ENCODE measurements at regions of chr12 and their contacts with region 1.

Region 1: GRCh38 chr12:46439793-46440511 is 67.4 kb upstream of the SLC38A2 start:
- DNase-seq: no peak
- ATAC-seq: no peak
- H3K4me3 ChIP-seq: no peak overlapping the region
- H3K27ac ChIP-seq: no peak overlapping the region
- H3K4me1 ChIP-seq: no peaks in the 10 kb centered on the region
- H3K27me3 ChIP-seq: no peaks in the 10 kb centered on the region

Region 2: DNA sequence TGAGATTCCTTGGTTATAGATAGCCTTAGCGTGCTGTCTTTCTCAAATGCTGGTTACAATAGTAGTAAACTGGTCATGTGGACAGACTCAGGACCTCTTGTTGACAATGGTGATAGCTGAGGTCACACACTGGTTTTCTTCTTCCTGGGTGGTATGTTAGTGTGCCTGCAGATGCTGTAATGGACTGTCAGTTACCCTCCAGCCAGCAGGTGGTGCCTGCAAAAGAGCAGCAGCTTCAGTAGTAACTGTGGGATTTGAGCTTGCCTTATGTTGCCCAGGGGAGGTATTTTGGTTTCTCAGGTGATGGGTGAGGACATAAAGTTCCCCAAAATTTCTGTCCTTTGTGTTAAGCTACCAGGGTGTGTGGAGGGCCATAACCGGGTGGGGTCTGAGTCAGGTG is 415.9 kb before region 1 on chr12:
- intact Hi-C with region 1: no loop called
- DNase-seq: no peak
- ATAC-seq: no peak
- H3K4me3 ChIP-seq: no peak overlapping the region
- H3K27ac ChIP-seq: no peak overlapping the region
- H3K4me1 ChIP-seq: no peaks in the 10 kb centered on the region
- H3K27me3 ChIP-seq: no peaks in the 10 kb centered on the region

Region 3: GRCh38 chr12:46136249-46136648 is 303.7 kb before region 1 on chr12:
- intact Hi-C with region 1: no loop called
- DNase-seq: no peak
- ATAC-seq: no peak
- H3K4me3 ChIP-seq: no peak overlapping the region
- H3K27ac ChIP-seq: no peak overlapping the region
- H3K4me1 ChIP-seq: no peaks in the 10 kb centered on the region
- H3K27me3 ChIP-seq: no peaks in the 10 kb centered on the region

Region 4: DNA sequence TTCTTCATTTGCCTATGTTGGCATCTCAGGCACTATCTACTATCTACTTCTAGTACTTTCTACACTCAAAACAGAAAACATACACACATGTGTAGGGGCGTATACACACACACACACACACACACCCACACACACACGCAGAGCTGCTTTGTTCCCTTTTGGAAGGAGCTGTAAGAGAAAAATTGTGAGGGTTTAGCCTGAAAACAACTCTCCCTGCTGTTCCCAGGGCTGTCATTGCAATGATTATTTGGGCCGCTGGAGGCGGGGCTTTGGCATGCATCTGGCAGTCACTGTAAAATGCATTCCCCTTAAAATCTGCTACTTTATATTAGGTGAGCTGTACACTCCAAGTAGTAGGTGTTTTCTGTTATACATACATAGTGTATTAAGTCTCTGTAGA is 38.3 kb before region 1 on chr12:
- intact Hi-C with region 1: loop called in 1 of 2 experiments (anchors 5 kb)
- DNase-seq: peak; percentile 50 to 74
- ATAC-seq: peak; percentile 78
- H3K4me3 ChIP-seq: no peak overlapping the region
- H3K27ac ChIP-seq: peak overlapping the region in 1 of 2 donors; percentile 57
- H3K4me1 ChIP-seq: peaks cover 0 to 4% of the 10 kb centered on the region in 2 donors
- H3K27me3 ChIP-seq: no peaks in the 10 kb centered on the region

Measured in aorta (tissue), 5 donors.